MCF 10A (cell line): ENCODE measurements at regions of chr6 and their contacts with region 1.

Region 1: GRCh38 chr6:112780498-112781096 is 433.5 kb downstream of the RFPL4B start:
- DNase-seq: peak; percentile 88
- H3K4me3 Mint-ChIP-seq: no peak overlapping the region
- H3K27ac Mint-ChIP-seq: no peak overlapping the region
- H3K4me1 Mint-ChIP-seq: no peaks in the 10 kb centered on the region
- H3K27me3 Mint-ChIP-seq: no peaks in the 10 kb centered on the region
- CTCF ChIP-seq: peak; percentile 87

Region 2: GRCh38 chr6:112337209-112337638 is 443.4 kb before region 1 on chr6:
- CTCF ChIA-PET with region 1: no interaction called
- POLR2A ChIA-PET with region 1: no interaction called
- intact Hi-C with region 1: loop called (anchors 10 kb)
- DNase-seq: peak; percentile 77
- H3K4me3 Mint-ChIP-seq: no peak overlapping the region
- H3K27ac Mint-ChIP-seq: no peak overlapping the region
- H3K4me1 Mint-ChIP-seq: peaks cover 3% of the 10 kb centered on the region
- H3K27me3 Mint-ChIP-seq: no peaks in the 10 kb centered on the region
- CTCF ChIP-seq: peak; percentile 70

Region 3: GRCh38 chr6:112795316-112795715 is 14.7 kb after region 1 on chr6:
- CTCF ChIA-PET with region 1: no interaction called
- POLR2A ChIA-PET with region 1: no interaction called
- intact Hi-C with region 1: no loop called
- DNase-seq: no peak
- H3K4me3 Mint-ChIP-seq: no peak overlapping the region
- H3K27ac Mint-ChIP-seq: no peak overlapping the region
- H3K4me1 Mint-ChIP-seq: no peaks in the 10 kb centered on the region
- H3K27me3 Mint-ChIP-seq: no peaks in the 10 kb centered on the region
- CTCF ChIP-seq: no peak

Region 4: DNA sequence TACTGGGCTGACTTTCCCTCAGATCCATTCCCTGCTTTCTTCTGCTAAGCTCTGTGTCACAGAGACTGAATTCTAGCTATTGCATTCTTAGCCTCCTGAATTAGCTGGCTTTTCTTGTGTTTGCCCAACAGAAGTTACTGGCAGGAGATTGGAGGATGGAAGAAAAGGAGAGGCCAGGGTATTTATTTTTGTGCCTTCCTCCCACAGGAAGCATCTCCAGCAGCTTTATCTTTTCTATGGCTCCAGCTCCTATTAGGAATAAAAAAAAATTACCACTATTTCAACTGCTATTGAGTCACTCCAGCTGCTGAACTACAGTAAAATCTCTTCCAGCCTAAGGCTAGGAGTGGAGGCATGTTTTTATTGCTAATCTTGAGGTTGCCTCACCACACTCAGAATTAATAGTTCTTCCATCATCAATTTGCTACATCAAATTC is 58.9 kb after region 1 on chr6:
- CTCF ChIA-PET with region 1: no interaction called
- POLR2A ChIA-PET with region 1: no interaction called
- intact Hi-C with region 1: no loop called
- DNase-seq: peak; percentile 1
- H3K4me3 Mint-ChIP-seq: no peak overlapping the region
- H3K27ac Mint-ChIP-seq: no peak overlapping the region
- H3K4me1 Mint-ChIP-seq: no peaks in the 10 kb centered on the region
- H3K27me3 Mint-ChIP-seq: no peaks in the 10 kb centered on the region
- CTCF ChIP-seq: no peak

Region 5: GRCh38 chr6:112951829-112952228 is 171.2 kb after region 1 on chr6:
- CTCF ChIA-PET with region 1: no interaction called
- POLR2A ChIA-PET with region 1: no interaction called
- intact Hi-C with region 1: no loop called
- DNase-seq: peak; percentile 27
- H3K4me3 Mint-ChIP-seq: no peak overlapping the region
- H3K27ac Mint-ChIP-seq: no peak overlapping the region
- H3K4me1 Mint-ChIP-seq: peaks cover 5% of the 10 kb centered on the region
- H3K27me3 Mint-ChIP-seq: no peaks in the 10 kb centered on the region
- CTCF ChIP-seq: no peak

Region 6: GRCh38 chr6:113190167-113190566 is 409.6 kb after region 1 on chr6:
- CTCF ChIA-PET with region 1: no interaction called
- POLR2A ChIA-PET with region 1: no interaction called
- intact Hi-C with region 1: loop called (anchors 1 kb)
- DNase-seq: peak; percentile 14
- H3K4me3 Mint-ChIP-seq: no peak overlapping the region
- H3K27ac Mint-ChIP-seq: no peak overlapping the region
- H3K4me1 Mint-ChIP-seq: no peaks in the 10 kb centered on the region
- H3K27me3 Mint-ChIP-seq: no peaks in the 10 kb centered on the region
- CTCF ChIP-seq: peak; percentile 16

Region 7: DNA sequence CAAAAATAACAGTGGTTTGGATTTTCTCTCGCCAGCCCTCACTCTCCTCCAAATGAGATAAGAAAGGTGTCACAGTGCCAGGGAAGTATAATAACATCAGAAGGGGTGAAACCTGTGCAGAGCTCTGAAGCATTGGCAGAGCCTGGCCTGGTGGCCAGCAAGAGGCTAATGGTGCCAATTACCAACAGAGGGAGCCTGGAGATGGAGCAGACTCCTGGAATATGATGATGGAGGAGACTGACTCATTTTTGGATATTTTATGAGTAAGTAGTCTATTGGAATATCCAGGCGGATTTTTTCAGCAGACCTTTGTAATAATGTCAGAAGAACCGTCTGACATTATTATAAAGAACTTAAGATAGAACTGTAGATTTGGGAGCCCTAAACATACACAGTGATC is 633.9 kb after region 1 on chr6:
- CTCF ChIA-PET with region 1: interaction called, 3 read pairs
- POLR2A ChIA-PET with region 1: no interaction called
- intact Hi-C with region 1: loop called (anchors 2 kb)
- DNase-seq: peak; percentile 79
- H3K4me3 Mint-ChIP-seq: no peak overlapping the region
- H3K27ac Mint-ChIP-seq: no peak overlapping the region
- H3K4me1 Mint-ChIP-seq: peaks cover 22% of the 10 kb centered on the region
- H3K27me3 Mint-ChIP-seq: no peaks in the 10 kb centered on the region
- CTCF ChIP-seq: peak; percentile 53

Region 8: GRCh38 chr6:113570641-113571040 is 790.0 kb after region 1 on chr6:
- CTCF ChIA-PET with region 1: interaction called, 3 read pairs
- POLR2A ChIA-PET with region 1: no interaction called
- intact Hi-C with region 1: loop called (anchors 2 kb)
- DNase-seq: no peak
- H3K4me3 Mint-ChIP-seq: no peak overlapping the region
- H3K27ac Mint-ChIP-seq: no peak overlapping the region
- H3K4me1 Mint-ChIP-seq: no peaks in the 10 kb centered on the region
- H3K27me3 Mint-ChIP-seq: no peaks in the 10 kb centered on the region
- CTCF ChIP-seq: peak; percentile 21

Region 9: GRCh38 chr6:113909234-113909856 is 1128.7 kb after region 1 on chr6:
- CTCF ChIA-PET with region 1: interaction called, 11 read pairs
- POLR2A ChIA-PET with region 1: no interaction called
- intact Hi-C with region 1: loop called (anchors 1 kb)
- DNase-seq: peak; percentile 61
- H3K4me3 Mint-ChIP-seq: no peak overlapping the region
- H3K27ac Mint-ChIP-seq: no peak overlapping the region
- H3K4me1 Mint-ChIP-seq: no peaks in the 10 kb centered on the region
- H3K27me3 Mint-ChIP-seq: no peaks in the 10 kb centered on the region
- CTCF ChIP-seq: peak; percentile 53